CD4-positive, alpha-beta memory T cell (primary cell): ENCODE measurements at regions of chr14 and their contacts with region 1.

Region 1: GRCh38 chr14:68788996-68789820 is 3.7 kb downstream of the ZFP36L1 start:
- DNase-seq: peak; percentile 84 to 90 (median 87)
- H3K4me3 ChIP-seq: peak overlapping the region; percentile 98 to 100
- H3K4me3 Mint-ChIP-seq: peak overlapping the region; percentile 88 to 100 (median 94)
- H3K27ac ChIP-seq: peak overlapping the region; percentile 99
- H3K27ac Mint-ChIP-seq: peak overlapping the region; percentile 96 to 100 (median 98)
- H3K4me1 ChIP-seq: peaks cover 52% of the 10 kb centered on the region
- H3K4me1 Mint-ChIP-seq: peaks cover 41 to 84% (median 53%) of the 10 kb centered on the region in 4 donors
- H3K27me3 ChIP-seq: no peaks in the 10 kb centered on the region
- H3K27me3 Mint-ChIP-seq: peaks cover 0 to 6% of the 10 kb centered on the region in 2 donors

Region 2: DNA sequence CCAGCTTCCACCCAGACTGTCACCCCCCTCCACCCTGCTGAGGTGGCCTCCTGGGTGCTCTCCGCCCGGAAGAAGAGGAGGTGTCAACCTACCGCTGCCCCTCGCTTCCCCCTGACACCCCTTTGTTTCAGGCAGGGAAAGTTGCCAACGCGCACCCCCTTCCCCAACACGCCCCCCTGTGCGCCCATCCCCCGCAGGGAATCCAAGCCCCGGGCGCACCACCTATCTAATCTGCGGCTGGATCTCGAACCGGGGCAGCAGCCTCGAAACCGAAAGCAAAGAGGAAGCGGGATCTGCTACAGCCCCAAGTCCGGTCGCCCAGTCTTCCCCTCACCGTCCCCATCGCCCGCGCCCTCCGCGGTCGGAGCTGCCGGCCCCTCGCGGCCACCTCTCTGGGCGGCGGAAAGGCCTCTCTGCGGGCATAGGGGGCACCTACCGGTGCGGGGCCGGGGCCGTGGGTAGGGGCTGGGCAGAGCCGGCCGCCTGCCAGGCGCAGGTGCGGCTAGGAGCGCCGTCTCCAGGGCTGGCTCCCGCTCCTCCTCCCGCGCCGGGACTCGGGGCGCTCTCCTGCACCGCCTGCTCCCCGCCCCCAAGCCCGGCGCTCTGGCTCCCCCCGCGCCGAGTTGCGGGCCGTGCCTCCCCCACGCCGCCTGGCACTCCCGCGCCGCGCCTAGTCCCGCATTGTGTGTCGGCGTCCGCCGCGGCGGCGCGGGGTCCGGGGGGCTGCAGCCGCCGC is 1274.4 kb before region 1 on chr14:
- CTCF ChIA-PET with region 1: no interaction called
- POLR2A ChIA-PET with region 1: no interaction called
- intact Hi-C with region 1: no loop called
- DNase-seq: peak; percentile 46 to 59 (median 55)
- H3K4me3 ChIP-seq: peak overlapping the region; percentile 53 to 56
- H3K4me3 Mint-ChIP-seq: peak overlapping the region; percentile 90 to 97 (median 94)
- H3K27ac ChIP-seq: peak overlapping the region; percentile 68
- H3K27ac Mint-ChIP-seq: peak overlapping the region; percentile 88 to 96 (median 92)
- H3K4me1 ChIP-seq: peaks cover 25% of the 10 kb centered on the region
- H3K4me1 Mint-ChIP-seq: peaks cover 13 to 36% (median 23%) of the 10 kb centered on the region in 4 donors
- H3K27me3 ChIP-seq: no peaks in the 10 kb centered on the region
- H3K27me3 Mint-ChIP-seq: no peaks in the 10 kb centered on the region

Region 3: DNA sequence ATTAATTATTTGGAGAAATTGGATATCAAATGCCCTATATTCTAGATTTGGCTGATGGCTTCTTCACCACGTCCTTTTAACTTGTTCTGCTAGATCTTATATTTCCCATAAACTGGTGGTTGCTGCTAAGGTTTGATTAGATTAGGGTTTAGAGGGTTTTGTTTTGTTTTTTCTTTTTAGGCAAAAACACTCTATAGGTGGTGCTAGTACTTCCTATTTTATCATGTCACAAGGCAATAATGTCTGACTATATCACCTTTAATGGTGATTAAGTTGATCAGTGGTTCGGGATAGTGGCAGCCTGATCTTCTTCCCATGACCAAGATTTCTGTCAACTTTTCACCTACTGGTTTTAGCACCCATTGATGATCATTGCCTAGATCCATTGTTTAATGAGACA is 514.5 kb before region 1 on chr14:
- CTCF ChIA-PET with region 1: interaction called, 5 read pairs
- POLR2A ChIA-PET with region 1: interaction called, 207 read pairs
- intact Hi-C with region 1: loop called (anchors 1 kb)
- DNase-seq: no peak
- H3K4me3 ChIP-seq: no peak overlapping the region
- H3K4me3 Mint-ChIP-seq: peak overlapping the region in 3 of 8 donors; percentile 6 to 15 (median 9)
- H3K27ac ChIP-seq: no peak overlapping the region
- H3K27ac Mint-ChIP-seq: peak overlapping the region in 5 of 7 donors; percentile 24 to 77 (median 44)
- H3K4me1 ChIP-seq: peaks cover 30% of the 10 kb centered on the region
- H3K4me1 Mint-ChIP-seq: peaks cover 22 to 53% (median 30%) of the 10 kb centered on the region in 4 donors
- H3K27me3 ChIP-seq: no peaks in the 10 kb centered on the region
- H3K27me3 Mint-ChIP-seq: no peaks in the 10 kb centered on the region

Region 4: GRCh38 chr14:68377459-68377858 is 411.7 kb before region 1 on chr14:
- CTCF ChIA-PET with region 1: interaction called, 10 read pairs
- POLR2A ChIA-PET with region 1: interaction called, 25 read pairs
- intact Hi-C with region 1: loop called (anchors 2 kb)
- DNase-seq: peak in 1 of 5 donors; percentile 10
- H3K4me3 ChIP-seq: no peak overlapping the region
- H3K4me3 Mint-ChIP-seq: peak overlapping the region in 7 of 8 donors; percentile 29 to 74 (median 42)
- H3K27ac ChIP-seq: peak overlapping the region; percentile 16
- H3K27ac Mint-ChIP-seq: peak overlapping the region in 6 of 7 donors; percentile 69 to 94 (median 87)
- H3K4me1 ChIP-seq: peaks cover 68% of the 10 kb centered on the region
- H3K4me1 Mint-ChIP-seq: peaks cover 32 to 70% (median 52%) of the 10 kb centered on the region in 4 donors
- H3K27me3 ChIP-seq: no peaks in the 10 kb centered on the region
- H3K27me3 Mint-ChIP-seq: no peaks in the 10 kb centered on the region

Region 5: DNA sequence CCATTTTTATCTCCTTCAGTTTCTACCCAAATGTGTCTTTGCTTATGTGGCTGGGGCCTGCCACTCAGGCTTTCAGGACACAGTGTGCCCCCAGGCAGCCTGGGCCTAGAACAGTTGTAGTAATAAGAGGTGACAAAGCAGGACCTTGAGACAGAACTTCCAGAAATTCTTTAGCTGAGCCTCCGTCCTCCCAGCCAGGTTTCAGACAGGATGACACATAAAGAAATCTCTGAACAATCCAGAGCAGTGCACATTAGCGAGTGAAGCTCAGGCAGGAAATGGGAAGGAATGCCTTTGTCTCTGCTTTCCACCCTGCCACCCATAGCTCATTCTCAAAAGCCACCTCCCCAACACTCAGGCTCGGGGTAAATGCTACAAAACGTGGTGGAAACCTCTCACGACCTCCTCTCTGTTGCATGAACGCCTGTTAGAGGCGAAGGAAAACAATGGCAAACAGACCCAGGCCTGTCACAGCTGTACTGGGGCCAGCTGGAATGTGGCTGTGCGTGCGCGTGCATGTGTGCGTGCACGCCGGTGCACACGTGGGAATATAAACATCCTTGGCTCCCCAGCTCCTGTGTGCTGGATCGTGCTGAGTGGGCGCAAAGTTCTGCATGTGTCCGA is 283.1 kb before region 1 on chr14:
- CTCF ChIA-PET with region 1: interaction called, 33 read pairs
- POLR2A ChIA-PET with region 1: interaction called, 235 read pairs
- intact Hi-C with region 1: no loop called
- DNase-seq: peak in 2 of 5 donors; percentile 9 to 39
- H3K4me3 ChIP-seq: peak overlapping the region; percentile 15 to 28
- H3K4me3 Mint-ChIP-seq: peak overlapping the region; percentile 63 to 86 (median 74)
- H3K27ac ChIP-seq: peak overlapping the region; percentile 27
- H3K27ac Mint-ChIP-seq: peak overlapping the region; percentile 60 to 93 (median 89)
- H3K4me1 ChIP-seq: peaks cover 45% of the 10 kb centered on the region
- H3K4me1 Mint-ChIP-seq: peaks cover 40 to 63% (median 52%) of the 10 kb centered on the region in 4 donors
- H3K27me3 ChIP-seq: no peaks in the 10 kb centered on the region
- H3K27me3 Mint-ChIP-seq: no peaks in the 10 kb centered on the region

Region 6: GRCh38 chr14:68680541-68681051 is 108.6 kb before region 1 on chr14:
- CTCF ChIA-PET with region 1: interaction called, 68 read pairs
- POLR2A ChIA-PET with region 1: interaction called, 581 read pairs
- intact Hi-C with region 1: loop called (anchors 1 kb)
- DNase-seq: no peak
- H3K4me3 ChIP-seq: no peak overlapping the region
- H3K4me3 Mint-ChIP-seq: no peak overlapping the region
- H3K27ac ChIP-seq: no peak overlapping the region
- H3K27ac Mint-ChIP-seq: peak overlapping the region in 4 of 7 donors; percentile 31 to 97 (median 50)
- H3K4me1 ChIP-seq: peaks cover 50% of the 10 kb centered on the region
- H3K4me1 Mint-ChIP-seq: peaks cover 38 to 58% (median 47%) of the 10 kb centered on the region in 4 donors
- H3K27me3 ChIP-seq: no peaks in the 10 kb centered on the region
- H3K27me3 Mint-ChIP-seq: no peaks in the 10 kb centered on the region